ENCODE measurements at regions of chr11 and their contacts with region 1.

Region 1: DNA sequence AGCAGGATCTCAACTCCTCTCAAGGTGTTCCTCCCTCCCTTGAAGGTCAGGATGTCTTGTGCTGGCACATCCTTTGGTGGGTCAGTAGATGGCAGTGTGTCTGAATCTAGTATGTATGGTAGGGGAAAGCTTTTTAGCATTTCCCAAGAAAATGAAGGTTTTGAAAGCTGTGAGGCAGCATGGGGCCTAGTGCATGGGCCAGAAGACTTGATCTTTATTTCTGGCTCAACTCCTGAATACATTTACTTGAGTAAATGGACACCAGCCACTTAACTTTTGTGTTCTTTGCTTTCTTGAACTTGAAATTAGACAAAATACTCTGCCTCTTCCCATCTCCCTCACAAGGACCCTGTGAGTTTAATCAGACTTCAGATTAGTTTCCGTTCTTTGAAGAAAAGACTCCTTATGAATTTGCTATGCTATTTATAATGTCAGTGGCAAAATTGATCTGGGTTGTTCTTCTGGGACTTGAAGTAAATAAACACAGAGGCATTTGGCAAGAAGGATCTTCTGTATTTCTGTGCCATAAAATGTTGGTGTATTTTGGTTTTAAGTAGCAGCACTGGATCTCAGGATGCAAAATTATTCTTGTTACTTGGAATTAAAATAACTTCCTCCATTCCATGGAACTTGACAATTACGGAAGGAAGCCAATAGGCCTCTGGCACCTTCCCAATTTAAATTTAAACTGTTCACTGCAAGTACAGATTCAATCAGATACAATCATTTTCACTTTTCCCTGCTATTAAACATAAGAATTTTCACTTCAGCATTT is 288.8 kb downstream of the CASP12 start:
- DNase-seq: peak in 13 of 14 experiments; percentile 7 to 73 (median 28)
- ATAC-seq: peak; percentile 99
- H3K4me3 ChIP-seq: no peak overlapping the region
- H3K4me3 Mint-ChIP-seq: no peak overlapping the region
- H3K27ac ChIP-seq: no peak overlapping the region
- H3K27ac Mint-ChIP-seq: no peak overlapping the region
- H3K4me1 ChIP-seq: peaks cover 3% of the 10 kb centered on the region
- H3K4me1 Mint-ChIP-seq: peaks cover 11% of the 10 kb centered on the region
- H3K27me3 ChIP-seq: no peaks in the 10 kb centered on the region
- H3K27me3 Mint-ChIP-seq: no peaks in the 10 kb centered on the region
- CTCF ChIP-seq: peak; percentile 85

Region 2: GRCh38 chr11:103682318-103683184 is 926.9 kb before region 1 on chr11:
- CTCF ChIA-PET with region 1: no interaction called
- POLR2A ChIA-PET with region 1: no interaction called
- intact Hi-C with region 1: loop called in 1 of 2 experiments (anchors 10 kb)
- DNase-seq: peak; percentile 1 to 70 (median 20)
- ATAC-seq: peak; percentile 90
- H3K4me3 ChIP-seq: no peak overlapping the region
- H3K4me3 Mint-ChIP-seq: no peak overlapping the region
- H3K27ac ChIP-seq: no peak overlapping the region
- H3K27ac Mint-ChIP-seq: no peak overlapping the region
- H3K4me1 ChIP-seq: peaks cover 5% of the 10 kb centered on the region
- H3K4me1 Mint-ChIP-seq: peaks cover 6% of the 10 kb centered on the region
- H3K27me3 ChIP-seq: peaks cover 0 to 4% of the 10 kb centered on the region in 2 experiments
- H3K27me3 Mint-ChIP-seq: no peaks in the 10 kb centered on the region
- CTCF ChIP-seq: peak; percentile 57

Region 3: GRCh38 chr11:104637657-104638170 is 28.2 kb after region 1 on chr11:
- CTCF ChIA-PET with region 1: no interaction called
- POLR2A ChIA-PET with region 1: no interaction called
- intact Hi-C with region 1: no loop called
- DNase-seq: no peak
- ATAC-seq: no peak
- H3K4me3 ChIP-seq: no peak overlapping the region
- H3K4me3 Mint-ChIP-seq: no peak overlapping the region
- H3K27ac ChIP-seq: no peak overlapping the region
- H3K27ac Mint-ChIP-seq: no peak overlapping the region
- H3K4me1 ChIP-seq: no peaks in the 10 kb centered on the region
- H3K4me1 Mint-ChIP-seq: peaks cover 4% of the 10 kb centered on the region
- H3K27me3 ChIP-seq: no peaks in the 10 kb centered on the region
- H3K27me3 Mint-ChIP-seq: no peaks in the 10 kb centered on the region
- CTCF ChIP-seq: no peak

Region 4: GRCh38 chr11:104946907-104947306 is 337.4 kb after region 1 on chr11:
- CTCF ChIA-PET with region 1: no interaction called
- POLR2A ChIA-PET with region 1: no interaction called
- intact Hi-C with region 1: loop called in 1 of 2 experiments (anchors 10 kb)
- DNase-seq: peak in 5 of 14 experiments; percentile 8 to 76 (median 71)
- ATAC-seq: peak; percentile 86
- H3K4me3 ChIP-seq: no peak overlapping the region
- H3K4me3 Mint-ChIP-seq: no peak overlapping the region
- H3K27ac ChIP-seq: no peak overlapping the region
- H3K27ac Mint-ChIP-seq: peak overlapping the region; percentile 2
- H3K4me1 ChIP-seq: no peaks in the 10 kb centered on the region
- H3K4me1 Mint-ChIP-seq: peaks cover 23% of the 10 kb centered on the region
- H3K27me3 ChIP-seq: no peaks in the 10 kb centered on the region
- H3K27me3 Mint-ChIP-seq: no peaks in the 10 kb centered on the region
- CTCF ChIP-seq: peak; percentile 71

Region 5: DNA sequence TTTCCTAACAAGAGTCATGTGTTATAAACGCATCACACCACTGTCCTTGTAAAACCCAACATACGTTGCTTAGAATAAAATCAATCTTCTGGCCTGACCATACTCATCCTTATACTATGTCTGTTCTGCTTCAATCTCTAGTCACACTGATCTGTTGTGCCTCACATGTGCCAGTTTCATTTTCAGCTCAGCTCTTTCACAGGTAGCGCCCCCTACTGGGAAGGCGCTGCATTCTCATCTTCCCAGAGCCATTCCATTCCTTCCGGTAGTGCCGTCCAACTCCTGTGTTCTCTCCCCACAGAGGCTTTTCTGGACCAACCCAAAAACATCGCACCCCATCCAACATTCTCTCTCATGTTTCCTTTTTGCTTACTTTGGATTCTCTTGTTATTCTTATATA is 391.3 kb after region 1 on chr11:
- CTCF ChIA-PET with region 1: no interaction called
- POLR2A ChIA-PET with region 1: no interaction called
- intact Hi-C with region 1: loop called (anchors 1 to 2 kb)
- DNase-seq: peak; percentile 17 to 73 (median 40)
- ATAC-seq: peak; percentile 82
- H3K4me3 ChIP-seq: no peak overlapping the region
- H3K4me3 Mint-ChIP-seq: no peak overlapping the region
- H3K27ac ChIP-seq: no peak overlapping the region
- H3K27ac Mint-ChIP-seq: no peak overlapping the region
- H3K4me1 ChIP-seq: no peaks in the 10 kb centered on the region
- H3K4me1 Mint-ChIP-seq: peaks cover 6% of the 10 kb centered on the region
- H3K27me3 ChIP-seq: no peaks in the 10 kb centered on the region
- H3K27me3 Mint-ChIP-seq: no peaks in the 10 kb centered on the region
- CTCF ChIP-seq: peak; percentile 72

Region 6: DNA sequence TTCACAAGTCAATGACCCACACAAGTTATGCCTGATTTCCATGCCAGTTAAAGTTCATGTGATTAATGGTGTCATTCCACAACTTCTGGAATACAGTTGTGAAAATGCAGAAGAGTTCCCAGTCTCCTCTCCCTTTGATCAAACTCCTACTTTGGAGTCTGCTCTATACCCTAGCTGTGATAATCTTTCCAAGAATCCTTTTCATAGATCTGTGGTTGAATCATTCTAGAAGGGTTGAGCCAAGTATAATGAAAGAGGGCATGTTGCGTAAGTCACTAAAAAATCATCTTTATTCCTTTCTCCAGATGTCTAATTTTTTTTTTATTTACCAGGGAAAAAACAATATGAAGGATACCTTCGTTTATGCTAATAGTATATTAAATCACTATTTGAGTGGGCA is 619.8 kb after region 1 on chr11:
- CTCF ChIA-PET with region 1: no interaction called
- POLR2A ChIA-PET with region 1: no interaction called
- intact Hi-C with region 1: no loop called
- DNase-seq: no peak
- ATAC-seq: no peak
- H3K4me3 ChIP-seq: no peak overlapping the region
- H3K4me3 Mint-ChIP-seq: no peak overlapping the region
- H3K27ac ChIP-seq: no peak overlapping the region
- H3K27ac Mint-ChIP-seq: no peak overlapping the region
- H3K4me1 ChIP-seq: no peaks in the 10 kb centered on the region
- H3K4me1 Mint-ChIP-seq: no peaks in the 10 kb centered on the region
- H3K27me3 ChIP-seq: no peaks in the 10 kb centered on the region
- H3K27me3 Mint-ChIP-seq: peaks cover 13% of the 10 kb centered on the region
- CTCF ChIP-seq: no peak

Region 7: DNA sequence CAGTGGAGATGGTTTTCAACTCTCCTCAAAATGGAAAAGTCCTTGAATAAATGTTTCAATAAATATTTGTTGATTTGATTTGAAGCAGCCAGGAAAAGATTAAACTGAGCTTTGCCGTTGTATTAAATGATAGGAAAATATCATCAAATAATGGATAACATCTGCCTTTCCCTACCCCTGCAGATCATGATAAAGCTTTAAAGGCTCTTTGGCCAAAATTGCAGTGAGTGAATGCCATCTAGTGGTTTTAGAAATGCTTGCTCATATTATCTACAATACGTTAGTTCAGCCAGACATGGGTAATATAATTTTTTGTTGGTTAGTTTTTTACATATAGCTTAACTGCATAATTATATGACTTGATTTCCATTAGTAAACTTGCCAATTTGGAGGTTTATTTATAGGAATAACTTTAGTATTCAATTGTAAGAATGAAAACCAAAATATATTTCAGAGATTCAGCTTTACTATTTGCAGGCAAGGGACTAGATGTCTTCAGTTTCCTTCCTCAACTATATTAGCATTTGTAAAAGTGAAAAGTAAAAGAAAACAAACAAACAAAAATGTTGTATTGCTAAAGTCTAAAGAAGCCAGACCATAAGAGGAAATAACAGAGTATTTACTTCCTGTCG is 1253.4 kb after region 1 on chr11:
- CTCF ChIA-PET with region 1: no interaction called
- POLR2A ChIA-PET with region 1: no interaction called
- intact Hi-C with region 1: loop called in 1 of 2 experiments (anchors 2 kb)
- DNase-seq: peak in 3 of 14 experiments; percentile 36 to 48 (median 45)
- ATAC-seq: no peak
- H3K4me3 ChIP-seq: no peak overlapping the region
- H3K4me3 Mint-ChIP-seq: no peak overlapping the region
- H3K27ac ChIP-seq: no peak overlapping the region
- H3K27ac Mint-ChIP-seq: no peak overlapping the region
- H3K4me1 ChIP-seq: no peaks in the 10 kb centered on the region
- H3K4me1 Mint-ChIP-seq: no peaks in the 10 kb centered on the region
- H3K27me3 ChIP-seq: peaks cover 0 to 6% of the 10 kb centered on the region in 2 experiments
- H3K27me3 Mint-ChIP-seq: peaks cover 5% of the 10 kb centered on the region
- CTCF ChIP-seq: peak; percentile 45